ENCODE measurements at regions of chr13 and their contacts with region 1.

Region 1: DNA sequence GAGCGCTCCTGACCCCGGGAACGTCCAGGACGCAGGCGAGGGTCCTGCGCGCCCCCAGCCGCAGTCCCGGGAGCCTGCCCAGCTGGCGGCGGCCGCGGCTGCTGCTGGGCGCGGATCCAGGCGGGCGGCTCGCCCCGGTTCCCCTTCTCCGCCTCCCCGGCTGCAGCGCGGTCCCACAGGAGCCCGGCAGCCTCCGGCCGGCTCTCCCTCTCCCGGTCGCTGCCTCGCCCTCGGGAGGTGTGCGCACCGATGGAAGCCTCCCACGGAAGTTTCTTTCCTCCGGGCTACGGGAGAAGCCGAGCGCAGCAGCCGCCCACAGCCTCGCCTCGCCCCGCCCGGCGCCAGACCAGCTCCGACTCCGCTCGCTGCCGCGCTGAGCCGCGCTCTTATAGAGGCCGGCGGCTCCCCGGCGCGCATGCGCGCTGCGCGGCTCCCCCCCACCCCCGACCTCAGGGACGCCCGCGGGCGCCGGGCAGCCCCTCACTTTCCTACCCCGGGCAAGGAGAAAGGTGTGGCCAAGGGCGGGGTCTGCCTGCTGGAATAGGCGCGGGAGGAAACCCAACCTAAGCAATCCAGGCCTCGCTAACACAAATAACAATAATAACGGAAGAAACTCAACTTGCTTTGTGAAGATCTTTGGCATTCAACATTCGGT is at the start of gene SHISA2:
- DNase-seq: peak; percentile 44
- H3K4me3 Mint-ChIP-seq: peak within 1 kb of the TSS; percentile 58
- H3K27ac Mint-ChIP-seq: no peak within 1 kb of the TSS
- H3K4me1 Mint-ChIP-seq: peaks cover 19% of the 10 kb centered on the region
- H3K27me3 Mint-ChIP-seq: peaks cover 27% of the 10 kb centered on the region
- total RNA-seq, gene SHISA2: 0.17 TPM in 1 of 2 experiments, not detected in the other

Region 2: GRCh38 chr13:25971459-25972145 is 80.2 kb before region 1 on chr13:
- CTCF ChIA-PET with region 1: no interaction called
- POLR2A ChIA-PET with region 1: no interaction called
- intact Hi-C with region 1: loop called (anchors 5 kb)
- DNase-seq: peak; percentile 72
- H3K4me3 Mint-ChIP-seq: no peak overlapping the region
- H3K27ac Mint-ChIP-seq: peak overlapping the region; percentile 30
- H3K4me1 Mint-ChIP-seq: peaks cover 47% of the 10 kb centered on the region
- H3K27me3 Mint-ChIP-seq: no peaks in the 10 kb centered on the region

Region 3: GRCh38 chr13:26030331-26030730 is 21.5 kb before region 1 on chr13:
- CTCF ChIA-PET with region 1: no interaction called
- POLR2A ChIA-PET with region 1: no interaction called
- intact Hi-C with region 1: no loop called
- DNase-seq: no peak
- H3K4me3 Mint-ChIP-seq: no peak overlapping the region
- H3K27ac Mint-ChIP-seq: no peak overlapping the region
- H3K4me1 Mint-ChIP-seq: no peaks in the 10 kb centered on the region
- H3K27me3 Mint-ChIP-seq: no peaks in the 10 kb centered on the region

Region 4: DNA sequence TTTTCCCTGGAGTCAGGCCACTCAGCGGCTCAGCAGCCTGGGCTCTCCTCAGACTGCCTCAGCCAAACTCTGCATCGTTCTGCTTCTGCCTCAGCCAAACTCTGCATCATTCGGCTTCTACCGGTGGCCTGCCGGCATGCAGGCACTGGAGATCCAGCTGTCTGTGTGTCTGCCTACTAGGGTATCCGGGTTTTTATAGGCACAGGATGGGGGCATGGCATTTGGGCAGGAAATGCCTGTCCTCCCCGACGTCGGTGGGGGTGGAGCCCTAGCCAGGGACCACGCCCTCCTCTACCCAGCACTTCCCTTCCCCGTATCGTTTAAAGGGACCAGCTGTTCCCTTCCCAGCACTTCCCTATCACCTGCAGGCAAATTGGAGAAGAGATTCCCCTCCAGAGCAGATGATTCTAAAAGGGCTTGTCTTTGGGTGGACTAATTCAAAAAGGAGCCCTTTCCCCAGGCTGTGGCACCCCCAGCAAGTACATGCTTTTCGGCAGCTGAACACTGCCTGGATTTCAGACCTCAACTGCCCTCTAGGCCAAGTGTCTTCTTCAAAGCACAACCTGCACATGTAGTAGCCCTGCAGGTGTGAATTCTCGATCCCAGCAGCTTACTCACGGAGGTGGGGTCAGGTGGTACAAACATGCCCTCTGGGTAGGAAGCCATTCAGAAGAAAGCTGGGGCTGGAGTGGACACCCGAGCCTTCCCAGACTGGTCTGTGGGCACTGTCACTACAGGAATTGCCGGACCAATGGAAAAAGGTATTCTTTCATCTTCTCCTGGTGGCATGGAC is 734.2 kb after region 1 on chr13:
- CTCF ChIA-PET with region 1: no interaction called
- POLR2A ChIA-PET with region 1: no interaction called
- intact Hi-C with region 1: no loop called
- DNase-seq: peak; percentile 64
- H3K4me3 Mint-ChIP-seq: peak overlapping the region; percentile 66
- H3K27ac Mint-ChIP-seq: no peak overlapping the region
- H3K4me1 Mint-ChIP-seq: peaks cover 10% of the 10 kb centered on the region
- H3K27me3 Mint-ChIP-seq: no peaks in the 10 kb centered on the region

Measured in activated CD4-positive, alpha-beta memory T cell treated with anti-CD3 and anti-CD28 coated beads for 36 hours (primary cell).